Right cardiac atrium (tissue), 5 donors: ENCODE measurements at regions of chr4 and their contacts with region 1.

Region 1: GRCh38 chr4:3322059-3322550 is 29.3 kb downstream of the RGS12 start:
- DNase-seq: peak in 2 of 3 donors; percentile 49 to 54
- ATAC-seq: peak; percentile 9 to 34
- H3K4me3 ChIP-seq: no peak overlapping the region
- H3K27ac ChIP-seq: peak overlapping the region; percentile 55
- H3K4me1 ChIP-seq: peaks cover 14% of the 10 kb centered on the region
- H3K27me3 ChIP-seq: no peaks in the 10 kb centered on the region

Region 2: GRCh38 chr4:3158841-3159240 is 163.3 kb before region 1 on chr4:
- intact Hi-C with region 1: loop called in 1 of 4 experiments (anchors 10 kb)
- DNase-seq: no peak
- ATAC-seq: no peak
- H3K4me3 ChIP-seq: no peak overlapping the region
- H3K27ac ChIP-seq: no peak overlapping the region
- H3K4me1 ChIP-seq: no peaks in the 10 kb centered on the region
- H3K27me3 ChIP-seq: no peaks in the 10 kb centered on the region

Region 3: GRCh38 chr4:3851211-3851610 is 529.1 kb after region 1 on chr4:
- intact Hi-C with region 1: no loop called
- DNase-seq: no peak
- ATAC-seq: no peak
- H3K4me3 ChIP-seq: no peak overlapping the region
- H3K27ac ChIP-seq: no peak overlapping the region
- H3K4me1 ChIP-seq: no peaks in the 10 kb centered on the region
- H3K27me3 ChIP-seq: no peaks in the 10 kb centered on the region